ENCODE measurements at regions of chr3 and their contacts with region 1.

Region 1: DNA sequence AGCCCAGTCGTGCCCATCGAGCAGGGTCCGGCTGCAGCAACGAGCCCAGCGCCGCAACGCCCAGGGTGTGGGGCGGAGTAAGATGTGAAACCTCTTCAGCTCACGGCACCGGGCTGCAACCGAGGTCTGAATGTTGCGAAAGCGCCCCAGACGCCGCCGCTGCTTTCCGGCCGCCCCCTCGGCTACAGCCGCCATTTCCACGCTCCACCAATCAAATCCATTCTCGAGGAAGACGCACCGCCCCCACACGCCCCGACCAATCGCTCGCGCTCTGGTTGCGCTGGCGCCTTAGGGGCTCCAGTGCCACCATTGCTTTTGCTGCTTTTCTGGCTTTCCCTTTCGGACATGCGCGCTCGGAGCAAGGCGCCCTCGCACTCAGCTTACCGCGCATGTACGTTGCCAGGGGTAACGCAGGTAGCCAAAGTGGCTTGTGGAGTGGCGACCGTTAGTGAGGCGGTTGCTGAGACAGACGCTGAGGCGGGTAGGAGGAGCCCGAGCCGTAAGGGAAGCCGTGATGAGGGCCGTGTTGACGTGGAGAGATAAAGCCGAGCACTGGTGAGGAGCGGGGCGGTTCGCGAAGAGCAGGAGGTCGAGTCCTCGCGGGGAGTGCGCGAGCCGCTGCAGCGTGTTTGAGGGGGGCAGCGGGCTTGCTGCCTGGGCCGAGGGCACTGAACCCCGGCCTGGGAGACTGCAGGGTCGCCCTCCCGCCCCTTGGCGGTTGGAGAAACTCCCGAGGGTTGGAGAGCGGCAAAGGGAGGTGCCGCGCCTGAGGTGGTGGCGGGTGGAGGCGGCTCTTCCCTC is at the starts of genes IFT122 and MBD4:
- DNase-seq: peak; percentile 96 to 98
- ATAC-seq: peak; percentile 93 to 96
- H3K4me3 ChIP-seq: peak within 1 kb of the TSS; percentile 68 to 89 (median 76)
- H3K27ac ChIP-seq: peak within 1 kb of the TSS; percentile 81 to 92 (median 85)
- H3K4me1 ChIP-seq: peaks cover 28 to 31% of the 10 kb centered on the region in 2 donors
- H3K27me3 ChIP-seq: no peaks in the 10 kb centered on the region
- CTCF ChIP-seq: peak in 1 of 5 experiments; percentile 4
- POLR2A ChIP-seq: peak; percentile 63 to 88
- total RNA-seq, gene IFT122: 4.6 to 16.4 (median 5.9) TPM
- total RNA-seq, gene MBD4: 15.4 to 18.1 (median 16.4) TPM

Region 2: GRCh38 chr3:129428376-129429079 is 11.5 kb before region 1 on chr3 and contains the start of gene EFCAB12:
- in situ Hi-C with region 1: no loop called
- intact Hi-C with region 1: loop called (anchors 1 kb)
- DNase-seq: peak; percentile 88 to 90
- ATAC-seq: peak; percentile 96
- H3K4me3 ChIP-seq: peak within 1 kb of the TSS; percentile 44 to 76 (median 66)
- H3K27ac ChIP-seq: peak within 1 kb of the TSS; percentile 56 to 73 (median 73)
- H3K4me1 ChIP-seq: peaks cover 7 to 11% of the 10 kb centered on the region in 2 donors
- H3K27me3 ChIP-seq: no peaks in the 10 kb centered on the region
- CTCF ChIP-seq: no peak
- POLR2A ChIP-seq: no peak
- total RNA-seq, gene EFCAB12: not detected